GM18951 (cell line): ENCODE measurements at regions of chr19 and their contacts with region 1.

Region 1: DNA sequence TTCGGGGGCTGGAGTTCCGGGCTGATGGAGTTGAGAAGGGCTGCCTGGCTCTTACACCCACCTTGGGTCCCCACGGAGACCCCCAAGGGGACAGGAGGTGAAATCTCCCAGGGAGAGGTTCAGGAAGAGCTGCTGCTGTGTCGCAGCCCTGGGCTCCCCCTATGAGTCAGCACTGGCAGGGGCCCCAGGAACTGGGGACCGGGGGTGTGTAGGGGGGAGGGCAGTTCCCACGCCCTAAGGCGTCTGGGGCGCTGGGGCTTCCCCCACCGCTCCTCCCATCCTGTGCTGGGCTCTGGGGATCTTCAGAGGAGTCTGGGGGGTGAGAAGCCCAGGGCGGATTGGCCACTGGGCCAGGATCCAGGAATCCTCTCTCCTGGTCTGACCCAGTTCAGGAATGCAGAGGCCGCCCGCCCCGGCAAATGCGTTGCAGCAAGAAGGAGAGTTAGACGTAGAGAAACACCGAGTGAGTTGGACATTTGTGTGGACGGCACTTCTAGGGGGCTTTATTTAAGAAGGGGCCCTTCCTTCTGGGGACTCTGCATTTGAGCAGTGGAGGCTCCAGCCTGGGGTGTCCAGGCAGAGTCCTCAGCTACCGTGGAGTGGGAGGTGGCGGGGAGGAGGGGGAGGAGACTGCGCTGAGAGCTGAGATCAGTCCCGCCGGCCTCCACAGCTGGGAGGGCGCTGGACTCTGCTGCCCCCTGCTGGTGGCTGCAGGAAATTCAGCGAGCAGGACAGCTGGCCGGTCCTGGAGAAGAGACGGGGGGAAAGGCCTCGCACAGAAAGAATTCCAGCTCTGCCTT is 15.0 kb upstream of the NANOS3 start:
- POLR2A ChIP-seq: peak; percentile 59

Region 2: GRCh38 chr19:13277104-13277809 is 584.7 kb before region 1 on chr19:
- in situ Hi-C with region 1: loop called (anchors 25 kb)
- POLR2A ChIP-seq: no peak

Region 3: DNA sequence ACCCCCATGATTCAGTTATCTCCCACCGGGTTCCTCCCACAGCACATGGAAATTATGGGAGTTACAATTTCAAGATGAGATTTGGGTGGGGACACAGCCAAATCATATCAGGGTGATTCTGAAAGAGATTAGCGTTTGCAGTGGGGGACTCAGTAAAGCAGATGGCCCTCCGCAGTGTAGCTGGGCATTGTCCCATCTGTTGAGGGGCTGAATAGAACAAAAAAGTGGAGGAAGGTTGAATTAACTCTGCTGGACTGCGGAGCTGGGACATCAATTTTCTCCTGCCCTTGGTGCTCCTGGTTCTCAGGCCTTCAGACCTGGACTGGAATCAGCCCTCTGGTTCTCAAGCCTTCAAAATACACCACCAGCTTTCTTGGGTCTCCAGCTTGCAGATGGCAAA is 300.5 kb before region 1 on chr19:
- in situ Hi-C with region 1: no loop called
- POLR2A ChIP-seq: no peak

Region 4: GRCh38 chr19:13588957-13589833 is 272.7 kb before region 1 on chr19:
- in situ Hi-C with region 1: loop called (anchors 5 kb)
- POLR2A ChIP-seq: no peak

Region 5: GRCh38 chr19:13633109-13633508 is 228.8 kb before region 1 on chr19:
- in situ Hi-C with region 1: no loop called
- POLR2A ChIP-seq: no peak

Region 6: GRCh38 chr19:13784731-13785452 is 77.0 kb before region 1 on chr19:
- in situ Hi-C with region 1: loop called (anchors 10 kb)
- POLR2A ChIP-seq: no peak